ENCODE measurements at regions of chr15 and their contacts with region 1.

Region 1: GRCh38 chr15:80776420-80777045 is 2.6 kb upstream of the CEMIP start:
- DNase-seq: peak; percentile 62
- ATAC-seq: no peak
- H3K4me3 ChIP-seq: no peak overlapping the region
- H3K27ac ChIP-seq: no peak overlapping the region
- H3K4me1 ChIP-seq: peaks cover 26% of the 10 kb centered on the region
- H3K27me3 ChIP-seq: peaks cover 2 to 4% of the 10 kb centered on the region in 2 experiments; a peak in 2 of 5 replicates
- CTCF ChIP-seq: peak; percentile 90
- EP300 ChIP-seq: no peak
- POLR2A ChIP-seq: no peak
- RAD21 ChIP-seq: peak; percentile 49; the same call in 1 of the 2 replicates

Region 2: DNA sequence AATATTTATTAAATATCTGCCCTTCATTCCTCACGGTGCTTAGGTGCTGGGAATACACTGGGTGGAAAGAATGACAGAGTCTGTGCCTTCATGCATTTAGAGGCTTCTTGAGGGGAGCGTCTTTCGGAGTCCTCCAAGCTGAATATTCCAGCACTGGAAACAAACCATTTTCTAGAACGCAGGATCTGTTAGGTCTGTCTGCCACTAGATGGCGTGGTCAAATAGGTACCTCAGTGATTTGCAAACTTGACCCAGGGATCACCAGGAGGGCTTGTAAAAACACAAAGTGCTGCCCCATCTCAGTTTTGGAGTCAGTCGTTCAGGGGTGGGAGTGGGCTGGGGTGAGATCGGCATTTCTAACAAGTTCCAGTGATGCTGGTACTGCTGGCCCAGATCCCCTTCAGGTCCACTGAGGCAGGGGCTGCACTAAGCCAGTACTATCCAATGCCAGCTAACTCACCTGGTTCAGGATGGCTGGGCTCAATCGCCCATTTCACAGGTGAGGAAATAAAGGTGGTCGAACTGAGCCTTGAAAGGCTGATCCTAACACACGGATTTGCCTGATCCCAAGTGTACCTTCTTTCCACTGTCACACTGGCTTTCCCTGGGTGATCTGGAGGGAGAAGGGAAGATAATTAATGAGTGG is 357.5 kb before region 1 on chr15:
- CTCF ChIA-PET with region 1: no interaction called
- POLR2A ChIA-PET with region 1: no interaction called
- in situ Hi-C with region 1: no loop called
- intact Hi-C with region 1: loop called (anchors 5 kb)
- DNase-seq: peak; percentile 47
- ATAC-seq: peak; percentile 70
- H3K4me3 ChIP-seq: no peak overlapping the region
- H3K27ac ChIP-seq: no peak overlapping the region
- H3K4me1 ChIP-seq: no peaks in the 10 kb centered on the region
- H3K27me3 ChIP-seq: no peaks in the 10 kb centered on the region; a peak in 1 of 5 replicates
- CTCF ChIP-seq: peak; percentile 71
- EP300 ChIP-seq: no peak
- POLR2A ChIP-seq: no peak
- RAD21 ChIP-seq: no peak

Region 3: DNA sequence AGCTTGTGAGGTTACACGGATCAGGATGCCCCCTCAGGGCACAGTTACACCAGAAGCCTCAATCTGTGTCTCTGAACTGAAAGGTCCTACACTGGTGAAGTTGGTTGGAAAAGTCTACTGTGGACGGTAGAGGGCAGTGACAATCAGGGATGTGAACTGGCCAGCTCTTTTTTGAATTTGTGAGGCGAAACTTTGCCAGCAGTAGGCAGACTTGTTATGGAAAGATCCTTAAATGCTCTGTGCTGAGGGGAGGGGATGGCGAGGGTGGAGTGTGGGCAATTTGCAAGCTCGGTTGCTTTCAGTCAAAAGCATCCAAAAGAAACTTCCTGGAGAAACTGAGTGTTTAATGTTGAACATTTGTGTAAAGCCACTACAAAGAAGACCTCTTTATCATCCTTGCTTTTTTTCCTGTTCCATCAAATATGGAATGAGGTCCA is 208.8 kb before region 1 on chr15:
- CTCF ChIA-PET with region 1: interaction called, 65 read pairs
- POLR2A ChIA-PET with region 1: no interaction called
- in situ Hi-C with region 1: loop called (anchors 5 kb)
- intact Hi-C with region 1: loop called (anchors 1 kb)
- DNase-seq: peak; percentile 72
- ATAC-seq: peak; percentile 96
- H3K4me3 ChIP-seq: no peak overlapping the region
- H3K27ac ChIP-seq: no peak overlapping the region
- H3K4me1 ChIP-seq: no peaks in the 10 kb centered on the region
- H3K27me3 ChIP-seq: no peaks in the 10 kb centered on the region
- CTCF ChIP-seq: peak; percentile 87
- EP300 ChIP-seq: no peak
- POLR2A ChIP-seq: no peak
- RAD21 ChIP-seq: peak; percentile 78

Region 4: GRCh38 chr15:80804965-80805495 is 28.5 kb after region 1 on chr15:
- CTCF ChIA-PET with region 1: no interaction called
- POLR2A ChIA-PET with region 1: interaction called, 26 read pairs
- in situ Hi-C with region 1: no loop called
- intact Hi-C with region 1: no loop called
- DNase-seq: peak; percentile 98
- ATAC-seq: peak; percentile 95
- H3K4me3 ChIP-seq: peak overlapping the region in 1 of 3 experiments; percentile 23; a peak in 2 of 6 replicates
- H3K27ac ChIP-seq: peak overlapping the region; percentile 59
- H3K4me1 ChIP-seq: peaks cover 41% of the 10 kb centered on the region
- H3K27me3 ChIP-seq: no peaks in the 10 kb centered on the region
- CTCF ChIP-seq: peak; percentile 27; the same call in 1 of the 2 replicates
- EP300 ChIP-seq: peak; percentile 58 to 90; a peak in 3 of 4 replicates
- POLR2A ChIP-seq: no peak
- RAD21 ChIP-seq: no peak

Region 5: DNA sequence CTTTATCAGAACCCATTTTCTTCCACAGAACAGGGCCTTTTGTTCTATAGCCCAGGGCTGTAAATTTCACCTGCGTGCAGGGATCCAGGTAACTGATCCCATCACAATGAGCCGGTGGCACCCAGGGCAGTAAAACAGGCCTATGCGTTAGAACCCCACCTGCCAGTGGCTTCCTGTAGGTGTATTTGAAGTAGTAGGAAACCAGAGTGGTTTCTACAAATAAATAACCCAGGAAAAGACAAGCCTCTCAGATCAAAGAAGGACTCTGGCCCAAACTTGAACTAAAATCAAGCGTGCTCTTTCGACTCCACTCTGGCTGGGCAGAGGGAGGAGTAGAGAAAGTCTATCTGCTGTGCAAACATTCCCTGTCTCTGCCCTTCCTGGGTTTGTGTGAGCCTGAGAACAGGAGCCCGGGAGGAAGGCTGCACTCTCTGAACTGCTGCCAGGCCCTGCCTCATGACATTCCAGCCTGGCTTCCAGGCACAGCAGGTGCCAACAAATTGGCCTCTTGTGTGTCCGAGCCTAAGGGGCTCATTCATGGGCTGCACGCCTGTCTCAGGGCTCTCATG is 80.4 kb after region 1 on chr15:
- CTCF ChIA-PET with region 1: interaction called, 25 read pairs
- POLR2A ChIA-PET with region 1: interaction called, 13 read pairs
- in situ Hi-C with region 1: loop called (anchors 5 kb)
- intact Hi-C with region 1: loop called (anchors 1 kb)
- DNase-seq: peak; percentile 97
- ATAC-seq: peak; percentile 99
- H3K4me3 ChIP-seq: no peak overlapping the region
- H3K27ac ChIP-seq: peak overlapping the region; percentile 74
- H3K4me1 ChIP-seq: peaks cover 66% of the 10 kb centered on the region
- H3K27me3 ChIP-seq: no peaks in the 10 kb centered on the region
- CTCF ChIP-seq: no peak
- EP300 ChIP-seq: peak in 1 of 2 experiments; percentile 91; a peak in 2 of 4 replicates
- POLR2A ChIP-seq: no peak
- RAD21 ChIP-seq: 0 out of 2 replicates have a peak, but pooled peaks have one; percentile 17

Measured in HepG2 (cell line).